ENCODE measurements at regions of chr11 and their contacts with region 1.

Region 1: GRCh38 chr11:2519862-2520735 is 75.3 kb downstream of the KCNQ1 start:
- DNase-seq: no peak

Region 2: DNA sequence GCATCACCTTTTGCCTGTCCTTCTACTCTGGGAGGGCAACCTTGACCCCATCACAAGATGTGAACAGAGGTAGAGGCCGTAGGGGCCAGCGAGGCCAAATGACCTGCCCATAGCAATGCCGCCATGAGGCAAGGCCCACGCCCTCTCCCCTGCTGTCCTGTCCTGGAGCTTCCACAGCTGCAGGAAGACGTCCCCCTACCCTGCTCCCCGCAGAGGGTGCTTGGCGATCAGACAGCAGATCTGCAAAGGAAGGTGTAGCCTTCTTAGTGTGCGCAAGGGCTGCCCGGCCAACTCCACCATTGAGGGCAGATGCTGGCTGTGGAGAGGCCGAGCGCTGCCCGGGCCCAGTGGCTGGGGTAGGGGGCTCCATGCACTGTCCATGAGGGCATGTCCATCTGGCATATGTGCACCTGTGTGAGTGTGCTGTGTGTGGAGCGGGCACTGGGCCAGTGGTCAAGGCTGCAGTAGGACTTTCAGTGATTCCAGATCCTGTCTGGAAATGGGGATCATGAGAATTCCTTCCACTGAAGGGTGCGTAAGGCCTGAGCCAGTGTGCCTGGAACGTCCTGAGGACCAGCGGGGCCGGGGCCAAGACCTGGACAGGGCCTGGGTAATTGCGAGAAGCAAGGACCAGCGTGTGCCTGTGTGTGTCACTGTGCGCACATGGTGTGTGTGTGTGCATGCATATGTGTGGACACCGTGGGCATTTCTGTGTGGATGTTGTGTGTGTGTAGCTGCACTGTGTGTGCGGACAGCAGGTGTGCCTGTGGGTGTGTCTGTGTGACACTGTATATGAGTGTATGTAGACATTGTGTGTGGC is 86.8 kb before region 1 on chr11:
- in situ Hi-C with region 1: loop called (anchors 5 kb)
- DNase-seq: no peak